Activated CD4-positive, alpha-beta T cell treated with anti-CD3 and anti-CD28 coated beads, Interleukin-2, amount 10 ng/mL, durations not matched to agents 24 days and 14 days (primary cell): ENCODE measurements at regions of chr3 and their contacts with region 1.

Region 1: DNA sequence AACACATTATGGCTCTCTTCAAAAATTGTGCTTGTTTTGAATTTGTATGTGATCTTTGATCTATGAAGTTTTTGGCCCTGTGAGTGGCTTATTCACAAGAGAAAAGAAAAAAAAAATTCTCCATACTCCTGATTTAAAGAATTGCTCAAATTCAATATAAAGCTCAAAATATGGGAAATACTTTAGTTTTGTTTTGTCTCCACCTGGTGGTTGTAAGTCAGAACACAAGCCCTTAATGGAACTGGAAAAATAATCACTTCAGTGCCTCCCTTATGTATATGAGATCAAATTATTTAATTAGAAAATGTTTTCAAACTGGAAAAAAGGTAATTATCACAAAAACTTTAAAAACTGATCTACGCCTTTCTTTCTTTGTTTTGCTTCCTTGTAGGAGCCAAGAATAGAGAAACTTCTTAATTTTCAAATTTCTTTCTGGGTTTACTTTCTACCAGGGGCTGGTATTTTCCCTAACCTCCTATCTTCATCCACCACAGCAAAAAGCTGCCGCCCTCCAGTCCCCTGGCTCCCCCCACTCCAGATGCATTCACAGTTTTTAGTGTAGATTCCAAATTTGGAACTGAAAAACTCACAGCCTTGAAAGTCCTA is 50.6 kb downstream of the SERP1 start:
- DNase-seq: peak; percentile 72
- H3K4me3 Mint-ChIP-seq: no peak overlapping the region
- H3K27ac Mint-ChIP-seq: no peak overlapping the region
- H3K4me1 Mint-ChIP-seq: peaks cover 1% of the 10 kb centered on the region
- H3K27me3 Mint-ChIP-seq: peaks cover 11% of the 10 kb centered on the region

Region 2: GRCh38 chr3:150227839-150228238 is 267.8 kb before region 1 on chr3:
- intact Hi-C with region 1: loop called (anchors 2 kb)
- DNase-seq: peak; percentile 73
- H3K4me3 Mint-ChIP-seq: no peak overlapping the region
- H3K27ac Mint-ChIP-seq: no peak overlapping the region
- H3K4me1 Mint-ChIP-seq: no peaks in the 10 kb centered on the region
- H3K27me3 Mint-ChIP-seq: peaks cover 33% of the 10 kb centered on the region

Region 3: DNA sequence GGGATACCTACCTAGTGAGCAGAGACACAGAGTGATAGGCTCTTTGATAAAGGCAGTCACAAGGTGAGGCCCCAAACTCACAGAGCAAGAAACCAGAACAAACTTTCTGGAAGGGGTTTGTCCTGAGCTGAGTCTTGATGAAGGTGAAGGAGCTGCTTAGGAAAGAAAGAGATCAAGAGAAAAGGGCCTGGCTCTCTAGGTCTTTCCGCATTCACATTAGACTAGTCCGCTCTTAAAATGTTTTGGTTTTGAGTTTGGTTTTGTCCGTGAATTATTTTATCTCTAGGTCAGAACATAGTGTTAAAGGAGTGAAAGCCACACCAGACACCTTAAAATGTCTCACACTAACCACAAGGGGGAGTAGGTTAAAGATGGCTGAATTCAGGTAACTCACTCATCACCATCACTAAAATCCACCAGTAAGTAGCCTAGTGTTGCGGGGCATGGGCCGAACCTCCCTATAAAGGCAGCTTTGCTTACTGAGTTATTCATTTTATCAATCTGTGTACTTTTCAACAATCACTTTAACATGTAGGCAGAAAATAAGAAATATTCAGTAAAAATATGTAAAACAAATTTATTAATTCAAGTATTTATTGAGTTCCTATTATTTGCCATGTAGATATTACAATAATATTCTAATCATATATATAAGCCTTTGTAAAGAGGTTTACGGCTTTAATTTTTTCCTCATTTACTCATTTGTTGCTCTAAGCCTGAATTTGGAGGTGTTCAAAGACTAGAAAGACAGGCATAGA is 209.1 kb before region 1 on chr3:
- intact Hi-C with region 1: loop called (anchors 1 kb)
- DNase-seq: peak; percentile 62
- H3K4me3 Mint-ChIP-seq: no peak overlapping the region
- H3K27ac Mint-ChIP-seq: no peak overlapping the region
- H3K4me1 Mint-ChIP-seq: no peaks in the 10 kb centered on the region
- H3K27me3 Mint-ChIP-seq: peaks cover 50% of the 10 kb centered on the region

Region 4: DNA sequence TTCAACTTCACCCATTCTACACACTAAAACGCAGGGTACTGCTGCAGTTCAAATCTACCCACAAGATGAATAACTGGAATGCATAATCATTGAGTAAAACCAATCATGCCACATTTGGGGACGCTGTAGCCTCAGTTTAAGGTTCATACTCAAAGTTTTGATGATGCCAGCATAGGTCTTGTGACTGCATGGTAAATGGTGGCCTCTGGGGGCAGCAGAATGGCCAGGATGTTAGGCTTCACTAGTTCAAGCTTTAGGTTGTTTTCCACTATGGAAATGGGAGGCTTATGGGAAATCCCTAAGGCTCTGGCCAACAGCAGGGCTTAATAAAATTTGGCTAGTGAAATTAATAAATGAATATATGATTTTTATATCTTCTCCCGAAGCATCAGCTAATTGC is 191.9 kb before region 1 on chr3:
- intact Hi-C with region 1: loop called (anchors 5 kb)
- DNase-seq: no peak
- H3K4me3 Mint-ChIP-seq: no peak overlapping the region
- H3K27ac Mint-ChIP-seq: no peak overlapping the region
- H3K4me1 Mint-ChIP-seq: no peaks in the 10 kb centered on the region
- H3K27me3 Mint-ChIP-seq: peaks cover 39% of the 10 kb centered on the region